A673 (cell line): ENCODE measurements at regions of chr11 and their contacts with region 1.

Region 1: GRCh38 chr11:45267052-45267451 is 19.1 kb downstream of the SYT13 start:
- DNase-seq: peak; percentile 66
- H3K4me3 ChIP-seq: no peak overlapping the region
- H3K27ac ChIP-seq: no peak overlapping the region
- H3K4me1 ChIP-seq: no peaks in the 10 kb centered on the region
- H3K27me3 ChIP-seq: peaks cover 29% of the 10 kb centered on the region
- CTCF ChIP-seq: peak; percentile 95

Region 2: DNA sequence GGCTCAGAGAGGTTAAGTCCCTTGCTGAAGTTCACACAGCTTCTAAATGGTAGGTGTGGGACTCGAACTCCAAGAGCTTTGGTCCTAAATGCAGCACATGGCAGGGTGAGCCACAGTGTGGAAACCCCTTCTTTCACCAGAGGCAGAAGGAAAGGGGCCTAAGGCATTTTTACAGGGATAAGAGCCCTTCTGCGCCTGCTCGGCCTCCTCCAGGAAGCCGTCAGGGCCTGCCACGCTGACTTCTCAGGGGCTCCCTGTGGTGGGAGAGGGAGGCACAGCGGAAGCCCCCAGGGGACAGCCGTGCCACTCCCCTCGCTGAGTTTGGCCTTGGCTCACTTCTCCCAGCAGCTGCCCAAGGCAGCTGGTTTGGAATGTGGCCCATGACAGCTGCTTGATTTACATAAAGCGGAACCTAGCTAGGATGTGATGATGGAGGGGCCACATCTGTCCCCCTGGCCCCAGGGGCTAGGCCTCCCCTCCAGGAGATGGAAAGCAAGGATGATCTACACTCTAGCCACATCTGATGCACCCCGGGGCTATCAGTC is 666.1 kb before region 1 on chr11:
- CTCF ChIA-PET with region 1: no interaction called
- POLR2A ChIA-PET with region 1: interaction called, 25 read pairs
- intact Hi-C with region 1: no loop called
- DNase-seq: peak; percentile 88
- H3K4me3 ChIP-seq: no peak overlapping the region
- H3K27ac ChIP-seq: no peak overlapping the region
- H3K4me1 ChIP-seq: peaks cover 15% of the 10 kb centered on the region
- H3K27me3 ChIP-seq: no peaks in the 10 kb centered on the region
- CTCF ChIP-seq: no peak

Region 3: DNA sequence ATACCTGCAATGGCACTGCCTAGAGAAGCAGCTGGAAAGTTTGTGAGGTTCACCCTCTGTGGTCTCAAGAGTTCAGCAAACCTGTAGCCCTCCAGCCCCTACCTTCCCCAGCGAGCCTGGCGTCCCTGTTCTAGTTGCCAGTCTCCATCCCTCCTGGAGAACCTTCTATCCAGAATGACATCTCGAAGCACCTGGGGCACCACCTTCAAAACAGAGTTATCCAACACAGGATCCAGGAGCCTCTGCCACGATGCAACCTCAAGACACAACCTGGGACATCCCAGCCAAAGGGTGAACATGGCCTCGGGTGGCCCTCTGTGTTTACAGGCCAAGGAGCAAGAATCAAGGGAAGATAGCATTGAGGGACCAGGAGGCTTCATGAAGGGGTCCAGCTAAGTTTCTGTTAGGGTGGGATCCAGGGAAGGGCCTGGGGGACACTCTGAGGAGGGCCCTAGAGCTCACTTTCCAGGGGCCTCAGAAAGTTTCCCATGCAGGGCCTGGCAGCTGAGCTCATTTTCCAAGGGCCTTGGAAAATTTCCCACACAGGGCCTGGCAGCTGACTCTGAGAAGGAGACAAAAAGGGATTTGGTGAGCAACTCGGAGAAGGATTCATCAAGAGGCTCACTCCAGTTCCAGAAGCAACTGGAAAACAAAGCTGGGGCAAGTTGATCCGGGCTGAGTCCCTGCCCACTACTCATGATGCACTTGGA is 56.0 kb after region 1 on chr11:
- CTCF ChIA-PET with region 1: no interaction called
- POLR2A ChIA-PET with region 1: no interaction called
- intact Hi-C with region 1: no loop called
- DNase-seq: no peak
- H3K4me3 ChIP-seq: no peak overlapping the region
- H3K27ac ChIP-seq: no peak overlapping the region
- H3K4me1 ChIP-seq: no peaks in the 10 kb centered on the region
- H3K27me3 ChIP-seq: peaks cover 6% of the 10 kb centered on the region
- CTCF ChIP-seq: no peak